ENCODE measurements at regions of chr9 and their contacts with region 1.

Region 1: DNA sequence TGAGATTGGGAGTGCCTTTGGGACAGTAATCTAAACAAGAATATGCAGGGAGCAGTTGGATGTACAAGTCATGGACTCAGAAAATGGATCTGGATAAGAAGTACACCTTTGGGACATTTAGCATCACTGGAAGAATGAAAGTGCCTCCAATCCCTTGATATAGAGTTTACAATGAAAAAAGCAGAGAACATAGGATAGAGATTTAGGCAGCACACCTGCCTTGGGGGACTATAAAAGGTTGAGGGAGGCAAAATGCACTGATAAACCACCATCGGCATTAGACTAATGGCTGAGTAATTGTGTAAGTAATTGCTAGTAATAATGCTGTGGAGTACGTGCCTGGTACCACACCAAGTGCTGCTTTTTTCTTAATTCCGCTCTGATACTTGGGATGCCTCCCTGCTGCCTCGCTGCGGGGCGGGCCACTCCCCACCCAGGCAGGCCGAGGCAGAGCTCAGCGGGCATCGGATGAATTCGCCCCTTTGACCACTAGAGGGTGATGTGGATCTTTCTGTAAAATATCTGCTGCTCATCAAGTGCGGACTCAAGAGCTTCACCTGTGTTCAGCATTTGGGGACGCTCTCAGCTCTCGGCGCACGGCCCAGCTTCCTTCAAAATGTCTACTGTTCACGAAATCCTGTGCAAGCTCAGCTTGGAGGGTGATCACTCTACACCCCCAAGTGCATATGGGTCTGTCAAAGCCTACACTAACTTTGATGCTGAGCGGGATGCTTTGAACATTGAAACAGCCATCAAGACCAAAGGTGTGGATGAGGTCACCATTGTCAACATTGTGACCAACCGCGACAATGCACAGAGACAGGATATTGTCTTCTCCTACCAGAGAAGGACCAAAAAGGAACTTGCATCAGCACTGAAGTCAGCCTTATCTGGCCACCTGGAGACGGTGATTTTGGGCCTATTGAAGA is 99.9 kb downstream of the ANKRD18B start:
- DNase-seq: peak; percentile 82 to 90
- ATAC-seq: peak; percentile 94 to 96
- H3K4me3 ChIP-seq: no peak overlapping the region
- H3K27ac ChIP-seq: peak overlapping the region; percentile 11 to 52; a peak in 2 of 6 replicates
- H3K4me1 ChIP-seq: peaks cover 23% of the 10 kb centered on the region
- CTCF ChIP-seq: peak; percentile 92
- EP300 ChIP-seq: no peak
- POLR2A ChIP-seq: no peak
- RAD21 ChIP-seq: peak; percentile 93

Region 2: DNA sequence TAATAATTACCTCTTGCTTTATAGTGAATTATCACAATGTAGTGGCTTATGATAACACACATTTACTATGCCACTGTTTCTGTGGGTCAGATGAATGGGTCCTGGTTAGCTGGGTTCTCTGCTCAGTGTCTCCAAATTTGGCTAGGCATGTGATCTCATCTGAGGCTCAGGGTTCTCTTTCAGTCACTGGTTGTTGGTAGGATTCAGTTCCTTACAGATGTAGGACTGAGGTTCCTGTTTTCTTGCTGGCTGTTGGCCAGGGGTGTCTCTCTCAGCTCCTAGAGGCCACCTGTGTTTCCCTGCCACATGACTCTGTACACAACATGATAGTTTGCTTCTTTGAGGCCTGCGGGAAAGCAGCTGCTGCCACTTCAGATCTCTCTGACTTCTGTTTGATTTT is 326.5 kb before region 1 on chr9:
- CTCF ChIA-PET with region 1: no interaction called
- POLR2A ChIA-PET with region 1: no interaction called
- DNase-seq: no peak
- ATAC-seq: 0 out of 6 replicates have a peak, but pooled peaks of 1 of the 2 experiments have one; percentile 34
- H3K4me3 ChIP-seq: no peak overlapping the region
- H3K27ac ChIP-seq: 0 out of 6 replicates have a peak overlapping the region, but pooled peaks of 1 of the 2 experiments have one; percentile 41
- H3K4me1 ChIP-seq: peaks cover 32% of the 10 kb centered on the region
- CTCF ChIP-seq: no peak
- EP300 ChIP-seq: no peak
- POLR2A ChIP-seq: no peak
- RAD21 ChIP-seq: no peak

Region 3: DNA sequence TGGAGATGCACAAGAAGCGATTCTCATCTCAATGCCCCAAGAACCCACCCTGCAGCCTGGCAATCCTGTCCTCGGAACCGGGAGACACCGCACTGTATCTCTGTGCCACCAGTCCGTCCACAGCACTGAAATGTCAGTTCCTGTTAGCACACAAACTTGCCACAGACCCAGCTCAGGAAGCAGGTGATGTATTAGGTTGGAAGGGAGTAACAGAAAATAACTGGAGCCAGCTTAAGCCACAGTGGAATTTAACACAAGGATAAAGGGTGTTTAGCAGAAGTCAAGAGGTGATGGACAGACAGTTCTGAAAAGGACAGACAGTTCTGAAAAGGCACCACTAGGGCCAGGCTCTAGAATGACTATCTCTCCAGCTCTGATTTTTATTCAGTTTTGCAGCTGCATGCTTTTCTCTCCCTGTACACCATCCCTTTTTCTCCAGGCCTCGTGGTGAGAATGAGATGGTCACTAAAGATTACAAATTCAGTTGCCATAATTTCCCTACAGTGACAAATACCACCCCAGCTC is 14.5 kb after region 1 on chr9:
- CTCF ChIA-PET with region 1: interaction called, 35 read pairs
- POLR2A ChIA-PET with region 1: no interaction called
- DNase-seq: no peak
- ATAC-seq: peak; percentile 77 to 82
- H3K4me3 ChIP-seq: no peak overlapping the region
- H3K27ac ChIP-seq: no peak overlapping the region
- H3K4me1 ChIP-seq: no peaks in the 10 kb centered on the region
- CTCF ChIP-seq: no peak
- EP300 ChIP-seq: no peak
- POLR2A ChIP-seq: no peak
- RAD21 ChIP-seq: no peak

Region 4: DNA sequence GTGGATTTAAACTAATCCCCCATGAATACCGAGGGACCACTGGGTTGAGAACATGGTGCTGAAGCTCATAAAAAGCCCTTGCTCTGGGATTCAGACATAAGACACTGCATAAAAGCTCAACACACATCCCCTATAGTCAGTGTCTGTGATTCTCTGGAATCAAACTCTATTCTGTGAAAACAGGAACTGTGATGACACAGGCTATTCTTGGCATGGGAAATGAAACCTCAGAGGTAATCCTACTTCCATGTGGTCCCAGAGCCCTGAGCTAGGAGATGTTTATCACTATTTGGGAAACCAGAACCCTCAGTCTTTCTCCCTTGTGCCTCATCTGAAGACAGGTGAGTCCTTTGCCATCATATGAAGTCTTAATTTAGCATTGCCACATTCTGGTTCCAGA is 36.0 kb after region 1 on chr9:
- CTCF ChIA-PET with region 1: interaction called, 13 read pairs
- POLR2A ChIA-PET with region 1: no interaction called
- DNase-seq: no peak
- ATAC-seq: no peak
- H3K4me3 ChIP-seq: no peak overlapping the region
- H3K27ac ChIP-seq: no peak overlapping the region
- H3K4me1 ChIP-seq: no peaks in the 10 kb centered on the region
- CTCF ChIP-seq: no peak
- EP300 ChIP-seq: no peak
- POLR2A ChIP-seq: no peak
- RAD21 ChIP-seq: no peak

Region 5: GRCh38 chr9:33687779-33688178 is 63.9 kb after region 1 on chr9:
- CTCF ChIA-PET with region 1: interaction called, 10 read pairs
- POLR2A ChIA-PET with region 1: no interaction called
- DNase-seq: peak in 1 of 2 experiments; percentile 26
- ATAC-seq: peak in 1 of 2 experiments; percentile 33; a peak in 1 of 6 replicates
- H3K4me3 ChIP-seq: no peak overlapping the region
- H3K27ac ChIP-seq: no peak overlapping the region
- H3K4me1 ChIP-seq: peaks cover 11% of the 10 kb centered on the region
- CTCF ChIP-seq: no peak
- EP300 ChIP-seq: no peak
- POLR2A ChIP-seq: no peak
- RAD21 ChIP-seq: no peak

Region 6: DNA sequence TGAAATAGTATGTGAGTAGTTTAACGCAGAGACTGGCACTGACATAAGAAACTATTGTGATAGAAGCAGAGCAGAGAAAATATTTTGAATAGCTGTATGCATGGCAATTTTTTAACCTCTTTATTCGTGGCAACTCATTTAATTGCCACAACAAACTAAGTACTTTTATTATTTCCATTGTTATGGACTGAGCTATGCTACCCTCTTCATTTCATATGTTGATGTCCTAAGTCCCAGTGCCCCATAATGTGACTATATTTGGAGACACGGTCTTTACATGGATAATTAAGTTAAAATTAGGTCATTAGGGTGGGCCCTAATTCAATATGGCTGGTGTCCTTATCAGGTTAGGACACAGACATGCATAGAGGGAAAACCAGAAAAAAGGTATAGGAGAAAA is 85.3 kb after region 1 on chr9:
- CTCF ChIA-PET with region 1: interaction called, 15 read pairs
- POLR2A ChIA-PET with region 1: no interaction called
- DNase-seq: no peak
- ATAC-seq: no peak
- H3K4me3 ChIP-seq: no peak overlapping the region
- H3K27ac ChIP-seq: no peak overlapping the region
- H3K4me1 ChIP-seq: no peaks in the 10 kb centered on the region
- CTCF ChIP-seq: no peak
- EP300 ChIP-seq: no peak
- POLR2A ChIP-seq: no peak
- RAD21 ChIP-seq: no peak

Region 7: GRCh38 chr9:33737811-33738606 is 114.1 kb after region 1 on chr9:
- CTCF ChIA-PET with region 1: interaction called, 13 read pairs
- POLR2A ChIA-PET with region 1: no interaction called
- DNase-seq: peak; percentile 47 to 81
- ATAC-seq: peak; percentile 95 to 99
- H3K4me3 ChIP-seq: no peak overlapping the region
- H3K27ac ChIP-seq: peak overlapping the region in 1 of 2 experiments; percentile 38; a peak in 2 of 6 replicates
- H3K4me1 ChIP-seq: 0 out of 3 replicates have a peak, but pooled peaks cover 5% of the 10 kb centered on the region
- CTCF ChIP-seq: peak; percentile 88
- EP300 ChIP-seq: no peak
- POLR2A ChIP-seq: no peak
- RAD21 ChIP-seq: peak; percentile 85 to 89

Measured in A549 (cell line).